Activated CD4-positive, alpha-beta memory T cell treated with anti-CD3 and anti-CD28 coated beads, Interleukin-2, amount 10 ng/mL, durations not matched to agents 7 days and 5 days (primary cell): ENCODE measurements at regions of chr1 and their contacts with region 1.

Region 1: GRCh38 chr1:45490626-45491486 is at the start of gene TESK2:
- DNase-seq: peak; percentile 98
- H3K4me3 Mint-ChIP-seq: no peak within 1 kb of the TSS
- H3K27ac Mint-ChIP-seq: no peak within 1 kb of the TSS
- H3K4me1 Mint-ChIP-seq: peaks cover 7% of the 10 kb centered on the region
- H3K27me3 Mint-ChIP-seq: peaks cover 7% of the 10 kb centered on the region
- total RNA-seq, gene TESK2: 3.7 to 4.3 TPM

Region 2: DNA sequence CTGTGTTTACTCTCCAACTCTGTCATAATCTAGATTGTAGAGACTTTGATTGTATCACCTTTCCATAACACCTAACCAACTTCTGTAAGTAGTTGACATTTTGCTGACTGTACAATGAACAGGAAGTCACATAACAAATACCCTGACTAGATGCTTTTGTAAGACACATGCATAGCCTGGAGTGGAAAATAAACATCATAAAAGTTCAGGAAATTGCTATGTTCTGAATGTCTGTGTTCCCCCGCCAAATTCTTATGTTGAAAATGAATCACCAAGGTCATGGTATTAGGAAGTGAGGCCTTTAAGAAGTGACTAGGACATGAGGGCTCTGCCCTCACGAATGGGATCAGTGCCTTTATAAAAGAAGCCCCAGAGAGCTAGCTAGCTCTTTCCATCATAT is 244.1 kb before region 1 on chr1:
- CTCF ChIA-PET with region 1: no interaction called
- POLR2A ChIA-PET with region 1: no interaction called
- DNase-seq: no peak
- H3K4me3 Mint-ChIP-seq: no peak overlapping the region
- H3K27ac Mint-ChIP-seq: no peak overlapping the region
- H3K4me1 Mint-ChIP-seq: peaks cover 6% of the 10 kb centered on the region
- H3K27me3 Mint-ChIP-seq: peaks cover 4% of the 10 kb centered on the region

Region 3: GRCh38 chr1:45348716-45349677 is 141.9 kb before region 1 on chr1:
- CTCF ChIA-PET with region 1: interaction called, 23 read pairs
- POLR2A ChIA-PET with region 1: interaction called, 3 read pairs
- DNase-seq: no peak
- H3K4me3 Mint-ChIP-seq: no peak overlapping the region
- H3K27ac Mint-ChIP-seq: peak overlapping the region; percentile 32
- H3K4me1 Mint-ChIP-seq: peaks cover 12% of the 10 kb centered on the region
- H3K27me3 Mint-ChIP-seq: no peaks in the 10 kb centered on the region

Region 4: GRCh38 chr1:45359882-45360513 is 130.9 kb before region 1 on chr1:
- CTCF ChIA-PET with region 1: interaction called, 140 read pairs
- POLR2A ChIA-PET with region 1: interaction called, 7 read pairs
- DNase-seq: peak; percentile 58
- H3K4me3 Mint-ChIP-seq: no peak overlapping the region
- H3K27ac Mint-ChIP-seq: no peak overlapping the region
- H3K4me1 Mint-ChIP-seq: peaks cover 6% of the 10 kb centered on the region
- H3K27me3 Mint-ChIP-seq: no peaks in the 10 kb centered on the region

Region 5: DNA sequence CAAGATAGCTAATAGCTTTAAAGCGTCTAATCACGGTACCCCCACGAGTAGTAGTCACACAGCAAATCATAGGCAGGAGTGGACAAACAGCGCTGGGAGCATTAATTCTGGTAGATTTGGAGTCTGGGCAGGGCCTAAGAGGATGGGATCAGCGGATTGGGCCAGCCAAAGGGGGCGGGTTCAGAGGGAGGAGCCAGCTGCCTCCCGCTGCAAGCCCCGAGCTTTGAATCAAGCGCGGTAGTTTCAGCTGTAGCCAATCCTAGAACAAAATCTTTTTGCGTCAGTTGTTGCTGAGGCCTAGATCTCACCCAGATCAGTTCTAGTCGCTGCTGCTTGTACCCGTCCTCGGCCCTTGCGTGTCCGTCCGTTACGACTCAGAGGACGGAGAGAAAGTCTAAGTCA is 92.4 kb after region 1 on chr1:
- CTCF ChIA-PET with region 1: interaction called, 7 read pairs
- POLR2A ChIA-PET with region 1: interaction called, 22 read pairs
- DNase-seq: peak; percentile 96
- H3K4me3 Mint-ChIP-seq: peak overlapping the region; percentile 88
- H3K27ac Mint-ChIP-seq: peak overlapping the region; percentile 98
- H3K4me1 Mint-ChIP-seq: peaks cover 29% of the 10 kb centered on the region
- H3K27me3 Mint-ChIP-seq: no peaks in the 10 kb centered on the region